ENCODE measurements at regions of chr2 and their contacts with region 1.

Region 1: DNA sequence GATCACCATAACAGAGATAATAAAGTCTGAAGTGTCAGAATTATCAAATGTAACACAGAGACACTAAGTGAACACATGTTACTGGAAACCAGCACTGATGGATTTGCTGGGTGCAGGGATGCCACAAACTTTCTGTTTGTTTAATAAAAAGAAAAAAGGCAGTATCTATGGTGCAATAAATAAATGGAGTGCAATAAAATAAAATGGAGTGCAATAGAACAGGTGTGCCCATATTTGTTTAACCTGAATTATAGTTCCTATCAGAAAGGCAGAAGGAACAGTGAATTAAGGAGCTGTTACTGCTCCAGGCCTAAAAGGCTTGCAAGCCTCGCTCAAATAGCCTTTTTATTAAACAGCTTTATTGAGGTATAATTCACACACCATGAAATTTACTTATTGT is 81.0 kb upstream of the KIDINS220 start:
- DNase-seq: no peak
- H3K4me3 ChIP-seq: no peak overlapping the region
- H3K27ac ChIP-seq: no peak overlapping the region
- H3K4me1 ChIP-seq: no peaks in the 10 kb centered on the region
- H3K27me3 ChIP-seq: no peaks in the 10 kb centered on the region
- CTCF ChIP-seq: no peak

Region 2: GRCh38 chr2:9392898-9393765 is 474.7 kb after region 1 on chr2:
- CTCF ChIA-PET with region 1: no interaction called
- POLR2A ChIA-PET with region 1: no interaction called
- intact Hi-C with region 1: no loop called
- DNase-seq: peak; percentile 66
- H3K4me3 ChIP-seq: no peak overlapping the region
- H3K27ac ChIP-seq: peak overlapping the region; percentile 77
- H3K4me1 ChIP-seq: peaks cover 15% of the 10 kb centered on the region
- H3K27me3 ChIP-seq: no peaks in the 10 kb centered on the region
- CTCF ChIP-seq: no peak

Region 3: DNA sequence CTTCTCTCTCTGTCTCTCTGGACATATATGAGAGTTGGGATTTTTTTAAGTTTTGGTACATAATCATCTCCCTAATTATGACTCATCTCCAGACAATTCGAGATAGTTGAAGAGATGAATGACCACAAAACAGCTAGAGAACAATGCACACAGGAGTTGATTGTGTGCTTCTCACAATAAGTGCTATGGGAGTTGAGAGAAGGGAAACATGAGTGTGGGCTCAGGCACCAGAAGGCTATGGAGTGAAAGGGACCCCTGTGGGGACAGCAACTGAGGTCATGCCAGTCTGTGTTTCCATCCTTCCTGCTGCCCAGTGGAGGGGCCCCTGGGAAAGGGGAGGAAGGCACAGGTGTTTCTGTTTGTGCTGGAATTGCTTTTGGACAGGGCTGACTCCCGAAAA is 718.9 kb after region 1 on chr2:
- CTCF ChIA-PET with region 1: no interaction called
- POLR2A ChIA-PET with region 1: interaction called, 10 read pairs
- intact Hi-C with region 1: no loop called
- DNase-seq: peak; percentile 39
- H3K4me3 ChIP-seq: no peak overlapping the region
- H3K27ac ChIP-seq: no peak overlapping the region
- H3K4me1 ChIP-seq: no peaks in the 10 kb centered on the region
- H3K27me3 ChIP-seq: no peaks in the 10 kb centered on the region
- CTCF ChIP-seq: no peak